Kidney (tissue), 22 donors: ENCODE measurements at regions of chr7 and their contacts with region 1.

Region 1: GRCh38 chr7:152709287-152710152 is 33.6 kb upstream of the XRCC2 start:
- DNase-seq: no peak
- H3K4me3 ChIP-seq: no peak overlapping the region
- H3K27ac ChIP-seq: no peak overlapping the region
- H3K4me1 ChIP-seq: no peaks in the 10 kb centered on the region
- H3K27me3 ChIP-seq: no peaks in the 10 kb centered on the region
- CTCF ChIP-seq: no peak

Region 2: DNA sequence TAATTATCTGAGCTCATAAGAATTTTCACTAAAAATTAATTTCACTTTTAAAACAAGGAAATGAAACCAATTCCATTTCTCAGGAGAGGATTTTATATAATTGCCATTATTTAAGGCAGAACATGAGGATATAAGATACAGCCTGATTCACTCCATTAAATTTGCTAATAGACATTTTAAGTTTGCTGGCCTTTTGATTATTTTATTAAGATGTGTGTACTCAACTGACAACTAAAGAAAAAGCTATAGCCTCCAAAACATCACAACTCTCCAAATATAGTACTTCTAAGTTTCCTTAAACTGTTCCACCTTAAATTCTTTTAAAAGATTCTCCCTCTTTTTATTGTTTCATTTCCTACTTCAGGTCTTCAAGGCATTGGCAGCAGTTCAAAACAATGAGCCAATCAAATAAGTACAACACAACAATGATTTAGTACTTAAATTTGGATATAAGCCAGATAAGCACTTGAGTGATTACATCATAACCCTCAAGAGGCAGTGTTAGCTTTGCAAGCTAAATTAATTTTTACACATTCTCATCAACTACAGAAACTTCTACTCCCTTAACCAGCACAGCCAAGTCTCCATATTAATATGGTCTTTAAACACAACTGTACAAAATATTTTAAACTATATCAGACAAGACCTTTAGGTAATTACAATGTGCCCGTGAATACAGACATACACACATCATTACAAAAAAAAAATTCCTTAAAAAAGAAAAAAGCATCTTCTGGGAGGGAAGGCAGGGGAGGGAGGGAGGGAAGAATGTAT is 395.5 kb before region 1 on chr7:
- intact Hi-C with region 1: no loop called
- DNase-seq: peak in 2 of 5 donors; percentile 75 to 88
- H3K4me3 ChIP-seq: no peak overlapping the region
- H3K27ac ChIP-seq: no peak overlapping the region
- H3K4me1 ChIP-seq: peaks cover 0 to 3% (median 0%) of the 10 kb centered on the region in 3 donors
- H3K27me3 ChIP-seq: no peaks in the 10 kb centered on the region
- CTCF ChIP-seq: no peak

Region 3: DNA sequence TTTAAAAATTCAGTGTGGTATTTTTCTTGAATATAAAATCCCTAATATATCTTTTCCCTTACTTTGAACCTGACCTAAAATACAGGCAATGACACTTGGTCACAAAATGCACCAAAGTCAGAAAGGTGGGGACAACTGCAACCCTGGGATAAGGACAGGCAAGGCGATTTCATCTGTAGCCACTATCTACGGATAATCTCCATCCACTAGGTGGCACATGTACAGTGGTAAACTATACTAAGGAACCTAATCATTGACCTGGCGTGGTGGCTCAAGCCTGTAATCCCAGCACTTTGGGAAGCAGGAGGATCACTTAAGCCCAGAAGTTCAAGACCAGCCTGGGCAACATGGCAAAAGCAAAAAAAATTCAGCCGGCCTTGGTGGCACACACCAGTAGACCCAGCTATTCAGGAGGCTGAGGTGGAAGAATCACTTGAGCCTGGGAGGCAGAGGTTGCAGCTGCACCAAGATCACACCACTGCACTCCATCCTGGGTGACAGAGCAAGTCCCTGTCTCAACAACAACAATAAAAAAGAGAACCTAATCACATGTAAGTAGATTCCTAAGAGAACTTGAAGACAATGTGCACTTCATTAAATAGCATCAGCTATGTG is 372.7 kb before region 1 on chr7:
- intact Hi-C with region 1: loop called (anchors 5 kb)
- DNase-seq: peak in 3 of 5 donors; percentile 18 to 70 (median 59)
- H3K4me3 ChIP-seq: no peak overlapping the region
- H3K27ac ChIP-seq: no peak overlapping the region
- H3K4me1 ChIP-seq: peaks cover 0 to 7% (median 7%) of the 10 kb centered on the region in 3 donors
- H3K27me3 ChIP-seq: no peaks in the 10 kb centered on the region
- CTCF ChIP-seq: peak; percentile 39